K562 (cell line): ENCODE measurements at regions of chr18 and their contacts with region 1.

Region 1: DNA sequence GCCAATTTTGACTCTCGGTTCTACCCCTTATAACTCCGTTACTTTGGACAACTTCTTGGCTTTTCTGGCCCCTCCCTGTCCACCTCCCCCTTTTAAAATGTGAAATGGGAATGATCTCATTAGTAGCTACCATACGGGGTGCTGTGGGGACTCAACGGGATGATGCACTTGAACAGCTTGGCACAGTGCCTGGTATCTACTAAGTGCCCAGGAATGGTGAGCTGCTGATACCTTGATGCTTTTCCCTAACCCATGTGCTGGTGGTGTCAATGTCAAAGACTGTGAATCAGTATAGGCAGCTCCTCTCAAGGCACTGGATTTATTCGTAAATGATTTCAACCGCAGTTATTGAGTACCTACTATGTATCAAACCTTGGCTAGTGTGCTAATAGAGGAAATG is 204.2 kb downstream of the LOXHD1 start:
- DNase-seq: no peak
- ATAC-seq: no peak
- H3K4me3 ChIP-seq: no peak overlapping the region
- H3K27ac ChIP-seq: no peak overlapping the region
- H3K4me1 ChIP-seq: no peaks in the 10 kb centered on the region
- H3K27me3 ChIP-seq: peaks cover 9 to 23% of the 10 kb centered on the region in 2 experiments; a peak in 4 of 5 replicates
- CTCF ChIP-seq: no peak
- EP300 ChIP-seq: no peak
- POLR2A ChIP-seq: no peak
- RAD21 ChIP-seq: no peak

Region 2: GRCh38 chr18:46408334-46408987 is 44.4 kb before region 1 on chr18:
- CTCF ChIA-PET with region 1: no interaction called
- POLR2A ChIA-PET with region 1: no interaction called
- in situ Hi-C with region 1: no loop called
- intact Hi-C with region 1: loop called (anchors 10 kb)
- DNase-seq: peak; percentile 39 to 50 (median 48)
- ATAC-seq: peak; percentile 82
- H3K4me3 ChIP-seq: no peak overlapping the region
- H3K27ac ChIP-seq: no peak overlapping the region
- H3K4me1 ChIP-seq: peaks cover 0 to 11% of the 10 kb centered on the region in 2 experiments; a peak in 3 of 5 replicates
- H3K27me3 ChIP-seq: peaks cover 0 to 41% of the 10 kb centered on the region in 2 experiments; a peak in 2 of 5 replicates
- CTCF ChIP-seq: peak; percentile 51 to 65 (median 53)
- EP300 ChIP-seq: peak; percentile 82
- POLR2A ChIP-seq: no peak
- RAD21 ChIP-seq: peak; percentile 41 to 67

Region 3: GRCh38 chr18:47032945-47033344 is 580.1 kb after region 1 on chr18:
- CTCF ChIA-PET with region 1: no interaction called
- POLR2A ChIA-PET with region 1: no interaction called
- in situ Hi-C with region 1: no loop called
- intact Hi-C with region 1: no loop called
- DNase-seq: no peak
- ATAC-seq: no peak
- H3K4me3 ChIP-seq: no peak overlapping the region
- H3K27ac ChIP-seq: no peak overlapping the region
- H3K4me1 ChIP-seq: peaks cover 0 to 7% of the 10 kb centered on the region in 2 experiments; a peak in 2 of 5 replicates
- H3K27me3 ChIP-seq: peaks cover 21 to 37% of the 10 kb centered on the region in 2 experiments
- CTCF ChIP-seq: no peak
- EP300 ChIP-seq: no peak
- POLR2A ChIP-seq: no peak
- RAD21 ChIP-seq: no peak